Posterior vena cava (tissue), 2 donors: ENCODE measurements at regions of chr14 and their contacts with region 1.

Region 1: DNA sequence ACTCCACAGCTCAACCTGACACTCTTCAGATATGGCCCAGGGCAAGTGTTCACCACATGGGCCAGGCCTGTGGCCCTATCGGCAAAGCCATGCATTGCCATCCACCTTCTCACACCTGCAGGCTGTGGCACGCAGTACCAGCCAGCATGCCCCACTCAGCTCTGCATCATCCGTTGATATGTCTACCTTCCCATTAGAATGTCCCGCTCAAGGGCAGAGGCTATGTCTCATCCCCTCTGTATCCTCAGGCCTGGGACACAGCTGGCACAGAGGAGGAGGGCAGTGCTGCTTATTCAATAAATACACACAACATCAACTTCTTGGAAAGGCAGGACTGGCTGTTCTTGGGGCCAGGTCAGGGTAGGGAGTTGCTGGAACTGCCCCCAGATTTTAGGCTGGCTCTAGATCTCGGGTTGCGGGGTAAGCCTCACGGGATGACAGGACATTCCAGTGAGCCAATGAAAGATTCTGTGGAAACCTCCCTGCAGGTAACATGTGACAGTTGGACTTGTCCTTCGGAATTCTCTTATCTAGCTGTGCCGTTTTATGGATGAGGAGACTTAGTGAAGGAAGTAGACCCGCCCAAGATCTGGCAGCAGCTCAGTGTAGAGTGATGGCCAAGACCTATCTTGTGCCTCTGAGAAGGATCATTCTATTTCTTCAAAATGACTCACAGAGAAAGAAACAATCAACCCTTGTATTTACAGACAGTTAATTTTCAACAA is 25.6 kb downstream of the SYNE3 start:
- DNase-seq: no peak

Region 2: GRCh38 chr14:95509495-95509894 is 18.6 kb after region 1 on chr14:
- intact Hi-C with region 1: loop called in 1 of 2 experiments (anchors 1 kb)
- DNase-seq: no peak